ENCODE measurements at regions of chr17 and their contacts with region 1.

Region 1: GRCh38 chr17:21126645-21127510 is at the start of gene DHRS7B:
- DNase-seq: peak; percentile 98
- H3K4me3 ChIP-seq: peak within 1 kb of the TSS; percentile 66 to 85 (median 76)
- H3K27ac ChIP-seq: peak within 1 kb of the TSS; percentile 91 to 95 (median 94)
- H3K4me1 ChIP-seq: peaks cover 0 to 27% (median 17%) of the 10 kb centered on the region in 4 donors
- H3K27me3 ChIP-seq: no peaks in the 10 kb centered on the region
- CTCF ChIP-seq: no peak
- EP300 ChIP-seq: no peak
- POLR2A ChIP-seq: peak; percentile 31 to 53
- total RNA-seq, gene DHRS7B: 19.7 to 31.9 (median 27.0) TPM

Region 2: DNA sequence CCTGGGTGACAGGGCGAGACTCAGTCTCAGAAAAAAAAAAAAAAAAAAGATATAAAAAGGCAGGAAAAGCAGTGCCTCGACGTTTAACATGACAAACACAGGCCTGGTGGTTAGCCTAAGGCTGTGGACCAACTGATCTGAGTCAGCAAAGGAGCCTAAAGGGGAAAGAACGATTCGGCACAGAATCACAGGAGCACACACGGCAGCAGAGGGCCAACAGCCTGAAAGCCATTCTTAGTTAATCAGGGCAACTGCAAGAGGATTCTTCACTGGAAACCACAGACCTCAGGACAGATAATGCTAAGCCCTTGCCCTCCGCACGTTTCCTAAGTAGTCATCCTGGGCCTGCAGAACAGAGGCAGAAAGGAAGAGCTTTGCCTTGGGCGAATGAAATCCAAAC is 72.4 kb after region 1 on chr17:
- intact Hi-C with region 1: no loop called
- DNase-seq: no peak
- H3K4me3 ChIP-seq: no peak overlapping the region
- H3K27ac ChIP-seq: no peak overlapping the region
- H3K4me1 ChIP-seq: peaks cover 0 to 47% (median 34%) of the 10 kb centered on the region in 4 donors
- H3K27me3 ChIP-seq: no peaks in the 10 kb centered on the region
- CTCF ChIP-seq: no peak
- EP300 ChIP-seq: no peak
- POLR2A ChIP-seq: no peak

Region 3: DNA sequence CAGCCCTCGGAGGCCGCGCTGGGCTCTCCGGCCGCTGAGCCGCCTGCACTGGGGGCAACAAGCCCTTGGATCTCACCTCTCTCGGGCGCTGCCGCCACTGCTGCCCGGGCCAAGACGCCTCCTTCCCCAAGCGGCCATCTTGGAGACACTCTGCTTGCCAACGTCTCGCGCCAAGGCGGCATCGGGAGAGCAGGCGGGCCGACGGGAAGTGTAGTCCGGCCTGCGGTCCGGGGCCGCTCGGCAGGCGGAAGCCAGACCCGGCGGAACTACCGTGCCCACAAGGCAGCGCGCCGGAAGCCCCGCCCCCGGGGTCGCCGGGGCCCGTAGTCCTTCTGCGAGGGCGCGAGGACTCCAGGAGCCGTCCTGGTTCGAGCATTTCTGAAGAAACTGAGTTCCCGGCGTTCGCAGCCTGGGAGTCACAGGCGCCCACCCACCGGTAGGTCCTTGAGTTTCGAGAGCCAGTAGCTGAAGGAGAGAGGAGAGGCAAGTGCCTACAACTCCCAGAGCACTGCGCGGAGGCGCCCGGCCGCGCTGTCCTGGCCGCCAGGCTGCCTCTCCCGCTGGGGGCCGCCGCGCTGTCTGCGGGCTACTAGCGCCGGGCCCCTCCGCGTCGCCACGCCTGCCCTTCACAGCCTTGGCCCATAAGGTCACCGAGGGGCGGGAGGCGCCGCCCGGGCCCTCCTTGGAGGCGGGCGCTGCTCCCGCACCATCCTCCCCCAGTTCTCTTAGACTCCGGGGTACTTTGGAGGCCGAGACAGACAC is 87.3 kb after region 1 on chr17 and contains the start of gene TMEM11:
- intact Hi-C with region 1: loop called (anchors 2 kb)
- DNase-seq: peak; percentile 98
- H3K4me3 ChIP-seq: peak within 1 kb of the TSS; percentile 85 to 95 (median 91)
- H3K27ac ChIP-seq: peak within 1 kb of the TSS; percentile 89 to 93 (median 92)
- H3K4me1 ChIP-seq: peaks cover 0 to 61% (median 54%) of the 10 kb centered on the region in 4 donors
- H3K27me3 ChIP-seq: no peaks in the 10 kb centered on the region
- CTCF ChIP-seq: no peak
- EP300 ChIP-seq: no peak
- POLR2A ChIP-seq: peak; percentile 51 to 78
- total RNA-seq, gene TMEM11: 14.5 to 32.8 (median 22.4) TPM

Region 4: DNA sequence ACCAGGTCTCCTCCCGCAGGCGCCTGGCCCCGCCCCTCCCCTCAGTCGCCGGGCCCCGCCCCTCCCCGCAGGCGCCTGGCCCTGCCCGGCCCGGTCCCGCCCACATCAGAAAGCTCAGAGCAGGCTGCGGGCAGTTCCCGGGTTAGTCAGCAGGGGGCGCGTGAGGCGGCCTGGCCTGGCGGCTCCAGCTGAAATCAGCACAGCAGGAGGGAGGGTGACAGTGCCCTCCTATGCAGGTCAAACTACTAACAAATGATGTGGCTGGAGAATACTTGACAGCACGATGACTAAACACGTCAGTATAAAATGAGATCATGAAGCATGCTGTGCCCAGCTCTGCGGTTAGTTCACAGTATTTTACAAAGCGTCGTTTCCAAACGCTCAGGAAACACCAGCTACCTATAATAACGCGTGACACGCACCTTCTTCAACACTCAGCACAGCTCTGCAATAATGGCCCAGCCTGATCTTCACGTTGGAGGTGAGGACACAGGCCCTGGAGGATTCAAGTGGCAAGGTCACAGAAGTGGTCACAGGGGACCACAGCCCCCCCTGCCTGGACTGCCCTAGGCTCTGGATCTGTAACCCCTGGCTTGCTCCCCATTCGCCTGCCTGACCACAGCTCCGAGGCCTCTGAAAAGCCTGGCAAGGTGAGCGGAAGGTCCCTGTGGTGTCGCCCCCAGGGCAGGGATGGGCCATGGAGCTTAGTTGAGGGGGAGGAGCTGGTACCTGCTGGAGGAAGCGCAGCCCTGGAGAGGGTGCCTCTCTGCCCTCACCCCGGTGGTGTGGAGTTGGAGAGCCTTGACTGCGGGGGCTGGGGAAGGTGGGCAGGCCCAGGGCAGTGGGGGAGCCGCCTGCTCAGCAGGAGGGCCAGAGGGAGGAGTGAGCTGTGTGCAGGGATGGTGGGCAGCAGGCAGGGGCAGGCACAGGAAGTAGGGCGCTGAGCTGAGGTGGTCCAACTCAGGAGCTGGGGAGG is 330.5 kb after region 1 on chr17:
- intact Hi-C with region 1: loop called (anchors 5 kb)
- DNase-seq: peak; percentile 91
- H3K4me3 ChIP-seq: no peak overlapping the region
- H3K27ac ChIP-seq: peak overlapping the region in 1 of 4 donors; percentile 20
- H3K4me1 ChIP-seq: peaks cover 0 to 13% (median 10%) of the 10 kb centered on the region in 4 donors
- H3K27me3 ChIP-seq: peaks cover 0 to 5% (median 0%) of the 10 kb centered on the region in 3 donors
- CTCF ChIP-seq: peak; percentile 65 to 95 (median 72)
- EP300 ChIP-seq: no peak
- POLR2A ChIP-seq: no peak

Region 5: GRCh38 chr17:21511363-21512198 is 384.7 kb after region 1 on chr17:
- intact Hi-C with region 1: loop called (anchors 2 kb)
- DNase-seq: peak; percentile 91
- H3K4me3 ChIP-seq: peak overlapping the region; percentile 25 to 55 (median 54)
- H3K27ac ChIP-seq: peak overlapping the region in 3 of 4 donors; percentile 64 to 75 (median 72)
- H3K4me1 ChIP-seq: peaks cover 0 to 18% (median 16%) of the 10 kb centered on the region in 4 donors
- H3K27me3 ChIP-seq: no peaks in the 10 kb centered on the region
- CTCF ChIP-seq: peak; percentile 37 to 69 (median 62)
- EP300 ChIP-seq: no peak
- POLR2A ChIP-seq: no peak

Measured in sigmoid colon (tissue), 7 donors.